ENCODE measurements at regions of chr12 and their contacts with region 1.

Region 1: GRCh38 chr12:114662512-114663177 is 21.3 kb downstream of the TBX3 start:
- DNase-seq: peak; percentile 83
- H3K4me3 Mint-ChIP-seq: no peak overlapping the region
- H3K27ac Mint-ChIP-seq: no peak overlapping the region
- H3K4me1 Mint-ChIP-seq: peaks cover 3% of the 10 kb centered on the region
- H3K27me3 Mint-ChIP-seq: peaks cover under 1% of the 10 kb centered on the region
- CTCF ChIP-seq: peak; percentile 92

Region 2: DNA sequence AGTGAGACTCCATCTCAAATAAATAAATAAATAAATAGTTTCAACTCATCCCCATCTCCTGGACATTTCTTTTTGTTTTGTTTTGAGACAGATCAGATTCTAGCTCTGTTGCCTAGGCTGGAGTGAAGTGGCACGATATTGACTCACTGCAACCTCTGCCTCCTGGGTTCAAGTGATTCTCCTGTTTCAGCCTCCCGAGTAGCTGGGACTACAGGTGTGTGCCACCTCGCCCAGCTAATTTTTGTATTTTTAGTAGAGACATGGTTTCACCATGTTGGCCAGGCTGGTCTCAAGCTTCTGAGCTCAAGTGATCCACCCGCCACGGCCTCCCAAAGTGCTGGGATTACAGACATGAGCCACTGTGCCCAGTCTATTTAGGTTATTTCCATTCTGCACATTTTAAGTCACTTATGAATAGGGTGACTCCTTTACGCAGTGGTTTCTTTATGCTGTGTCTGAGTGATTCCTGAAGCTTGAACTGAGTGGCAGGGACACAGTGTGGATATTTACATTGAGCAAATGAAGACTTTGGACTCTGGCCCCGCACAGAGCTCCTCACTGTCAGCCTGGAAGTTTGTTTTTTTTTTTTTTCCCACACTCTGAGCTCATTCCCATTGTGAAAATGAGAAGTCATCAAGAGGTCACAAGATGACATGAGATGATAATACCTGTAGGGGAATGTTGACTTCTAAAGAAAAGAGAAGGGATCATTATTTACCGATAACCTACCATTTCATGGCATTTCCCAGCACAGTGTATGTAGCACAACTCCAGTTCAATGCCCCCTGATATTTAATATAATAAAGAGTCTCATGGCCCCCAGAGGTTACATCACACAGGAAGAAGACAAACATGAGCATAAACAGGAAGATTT is 51.3 kb before region 1 on chr12:
- CTCF ChIA-PET with region 1: no interaction called
- intact Hi-C with region 1: no loop called
- DNase-seq: no peak
- H3K4me3 Mint-ChIP-seq: no peak overlapping the region
- H3K27ac Mint-ChIP-seq: no peak overlapping the region
- H3K4me1 Mint-ChIP-seq: no peaks in the 10 kb centered on the region
- H3K27me3 Mint-ChIP-seq: no peaks in the 10 kb centered on the region
- CTCF ChIP-seq: no peak

Region 3: DNA sequence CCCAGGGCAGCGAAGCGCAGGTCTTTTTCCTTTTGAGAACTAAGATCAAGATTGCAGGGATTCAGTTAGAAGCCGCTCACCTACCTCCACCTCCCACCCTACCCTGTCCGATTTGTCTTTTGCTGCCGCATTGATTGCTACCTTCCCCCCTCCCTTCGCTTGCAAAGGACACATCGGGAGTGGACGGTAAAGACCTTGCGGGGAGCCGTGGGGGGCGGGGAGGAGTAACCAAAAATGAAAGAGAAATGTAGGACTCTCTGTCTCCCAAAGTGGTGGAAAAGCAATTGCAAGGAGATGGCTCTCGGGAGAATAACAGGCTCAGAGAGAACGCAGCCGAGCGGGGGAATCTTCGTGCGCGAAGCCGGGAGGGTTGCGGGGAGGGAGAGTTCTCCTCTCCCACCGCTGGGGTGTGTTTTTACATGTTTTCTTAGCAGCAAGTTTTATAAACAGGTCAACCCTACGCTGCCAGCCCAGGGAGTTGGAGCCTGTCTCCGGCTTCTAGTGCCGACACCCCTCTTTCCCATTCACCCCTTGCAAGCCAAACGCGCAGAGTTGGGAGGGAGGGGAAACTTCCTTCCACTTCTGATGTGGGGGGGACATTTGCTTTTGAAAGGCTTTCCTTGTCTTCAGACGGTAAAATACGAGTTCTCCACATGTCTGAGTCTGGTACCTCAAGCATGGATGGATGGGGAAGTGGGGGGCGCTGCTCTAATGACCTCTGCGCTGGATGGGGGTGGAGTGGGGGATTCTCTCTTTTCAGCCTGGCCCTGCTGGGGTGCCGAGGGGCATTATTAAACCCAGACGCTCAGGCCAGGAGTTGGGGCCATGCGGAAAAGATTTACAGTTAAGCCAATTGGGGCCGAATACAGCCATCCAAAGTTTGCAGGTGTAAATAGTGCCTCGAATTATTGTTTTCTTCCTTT is 30.2 kb after region 1 on chr12:
- CTCF ChIA-PET with region 1: no interaction called
- intact Hi-C with region 1: no loop called
- DNase-seq: no peak
- H3K4me3 Mint-ChIP-seq: no peak overlapping the region
- H3K27ac Mint-ChIP-seq: no peak overlapping the region
- H3K4me1 Mint-ChIP-seq: no peaks in the 10 kb centered on the region
- H3K27me3 Mint-ChIP-seq: peaks cover 66% of the 10 kb centered on the region
- CTCF ChIP-seq: no peak

Region 4: DNA sequence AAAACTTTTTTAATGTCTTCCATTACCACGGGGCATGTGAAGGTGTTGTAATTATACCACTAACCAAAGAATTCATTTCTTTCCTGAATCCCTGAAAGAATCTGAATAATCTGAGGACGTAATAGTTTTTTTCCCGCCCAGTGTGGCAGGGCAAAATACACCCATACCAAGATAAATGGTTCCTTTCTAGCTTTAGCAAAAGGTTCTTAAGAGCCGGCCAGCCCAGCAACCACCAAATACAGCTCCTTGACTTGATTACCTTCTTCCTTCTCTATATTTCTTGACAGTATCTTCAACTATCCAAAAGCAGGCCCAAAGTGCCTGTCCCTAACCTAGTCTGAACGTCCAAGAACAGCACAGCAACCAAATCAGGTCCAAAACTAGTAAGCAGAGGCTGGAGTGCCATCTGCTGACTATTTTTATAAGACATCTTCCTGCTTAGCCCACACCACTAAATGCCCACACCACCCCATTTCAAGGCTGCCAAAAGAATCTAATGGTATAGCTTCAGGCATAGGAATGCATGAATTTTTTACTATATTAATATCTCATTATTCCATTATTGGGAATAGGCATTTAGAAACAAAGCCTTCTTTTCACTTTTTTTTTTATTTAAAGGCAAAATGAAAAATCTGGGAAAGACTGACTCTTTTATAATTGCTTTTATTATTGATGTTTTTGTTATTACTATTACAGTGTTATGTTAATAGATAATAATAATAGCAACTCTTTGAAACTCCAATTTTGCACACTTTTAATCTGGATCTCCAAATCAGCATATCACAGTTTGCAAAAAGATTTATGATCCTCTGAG is 1090.5 kb after region 1 on chr12:
- CTCF ChIA-PET with region 1: interaction called, 4 read pairs
- intact Hi-C with region 1: loop called (anchors 1 kb)
- DNase-seq: peak; percentile 30
- H3K4me3 Mint-ChIP-seq: no peak overlapping the region
- H3K27ac Mint-ChIP-seq: no peak overlapping the region
- H3K4me1 Mint-ChIP-seq: no peaks in the 10 kb centered on the region
- H3K27me3 Mint-ChIP-seq: peaks cover 14% of the 10 kb centered on the region
- CTCF ChIP-seq: no peak

Region 5: DNA sequence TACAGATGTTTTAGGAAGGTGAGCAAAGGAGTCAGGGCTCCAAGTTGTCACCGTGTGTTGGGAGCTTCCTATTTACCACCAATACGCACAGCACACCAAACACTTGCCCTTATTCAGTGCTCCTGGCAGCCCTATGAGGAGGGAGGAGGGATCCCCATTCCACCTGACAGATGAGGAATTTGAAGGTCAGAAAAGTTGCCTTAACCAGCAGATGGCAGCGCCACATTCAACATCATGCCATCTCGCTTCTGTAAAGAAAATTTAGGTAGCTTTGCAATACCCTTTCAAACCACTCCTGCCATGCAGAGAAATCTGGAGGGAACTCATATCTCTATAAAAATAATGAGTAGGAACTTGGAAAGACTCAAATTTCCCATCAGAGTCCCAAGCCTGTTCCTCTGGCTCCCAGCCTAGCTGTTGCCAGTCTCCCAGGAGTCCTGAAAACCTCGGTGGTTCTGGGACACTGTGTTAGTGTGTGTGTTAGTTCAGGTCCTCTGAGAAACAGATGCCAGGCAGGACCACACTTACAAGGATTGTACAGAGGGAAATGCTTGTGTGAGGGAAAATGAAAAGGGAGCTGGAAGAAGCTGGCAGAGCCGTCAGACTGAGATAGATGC is 1204.4 kb after region 1 on chr12:
- CTCF ChIA-PET with region 1: no interaction called
- intact Hi-C with region 1: loop called (anchors 2 kb)
- DNase-seq: peak; percentile 42
- H3K4me3 Mint-ChIP-seq: no peak overlapping the region
- H3K27ac Mint-ChIP-seq: no peak overlapping the region
- H3K4me1 Mint-ChIP-seq: peaks cover 5% of the 10 kb centered on the region
- H3K27me3 Mint-ChIP-seq: peaks cover 18% of the 10 kb centered on the region
- CTCF ChIP-seq: no peak

Measured in Calu3 (cell line).